Pancreas (tissue), 10 donors: ENCODE measurements at regions of chr21 and their contacts with region 1.

Region 1: DNA sequence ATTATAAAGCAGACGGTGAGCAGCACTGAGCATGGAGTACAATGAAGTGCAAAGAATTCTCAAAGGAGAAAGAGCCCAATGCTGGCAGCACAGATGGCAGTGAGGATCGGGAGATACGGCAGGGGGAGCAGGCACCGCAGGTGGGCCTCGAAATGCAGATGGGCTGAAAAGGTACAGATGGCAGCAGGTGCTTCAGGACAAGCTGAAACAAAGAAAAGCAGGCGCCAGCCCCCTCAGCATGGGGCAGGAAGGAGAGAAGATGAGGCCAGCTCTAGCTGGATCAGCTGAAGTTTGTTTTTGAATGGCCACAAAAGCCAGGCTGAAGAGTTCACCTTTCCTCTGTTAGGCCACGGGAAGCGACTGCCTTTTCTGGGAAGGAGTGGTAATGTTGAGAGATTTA is 7.7 kb downstream of the CFAP298 start:
- DNase-seq: no peak
- ATAC-seq: no peak
- H3K4me3 ChIP-seq: no peak overlapping the region
- H3K27ac ChIP-seq: no peak overlapping the region
- H3K4me1 ChIP-seq: no peaks in the 10 kb centered on the region
- H3K27me3 ChIP-seq: no peaks in the 10 kb centered on the region
- CTCF ChIP-seq: no peak

Region 2: GRCh38 chr21:32233055-32233546 is 371.4 kb before region 1 on chr21:
- intact Hi-C with region 1: no loop called
- DNase-seq: no peak
- ATAC-seq: peak in 1 of 4 donors; percentile 13
- H3K4me3 ChIP-seq: no peak overlapping the region
- H3K27ac ChIP-seq: no peak overlapping the region
- H3K4me1 ChIP-seq: no peaks in the 10 kb centered on the region
- H3K27me3 ChIP-seq: no peaks in the 10 kb centered on the region
- CTCF ChIP-seq: no peak

Region 3: DNA sequence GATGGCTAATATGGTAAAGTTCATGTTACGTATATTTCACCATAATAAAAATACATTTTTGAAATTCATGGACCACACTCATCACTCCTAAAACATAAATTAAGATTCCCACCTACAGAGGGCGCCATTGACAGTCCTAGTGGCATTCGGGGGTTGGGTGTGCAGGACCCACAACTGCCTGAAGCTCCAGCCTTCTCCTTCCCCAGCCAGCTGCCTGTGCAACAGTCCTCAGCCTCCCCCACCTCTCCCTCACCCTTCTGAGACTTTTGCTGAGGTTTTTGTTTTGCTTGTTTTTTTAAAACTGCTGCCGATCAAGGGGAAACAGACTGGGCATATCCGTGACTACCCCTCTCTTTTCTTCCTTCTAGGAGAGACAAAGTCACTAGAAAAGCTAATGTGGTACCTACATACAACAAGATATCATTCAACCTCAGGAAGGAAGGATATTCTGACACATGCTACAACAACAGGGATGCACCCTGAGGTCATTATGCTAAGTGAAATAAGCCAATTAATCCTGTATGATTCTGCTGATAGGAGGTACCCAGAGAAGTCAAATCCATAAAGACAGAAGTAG is 201.2 kb before region 1 on chr21:
- intact Hi-C with region 1: loop called in 2 of 3 experiments (anchors 5 to 10 kb)
- DNase-seq: peak in 4 of 6 donors; percentile 26 to 54 (median 45)
- ATAC-seq: peak; percentile 77 to 98 (median 92)
- H3K4me3 ChIP-seq: no peak overlapping the region
- H3K27ac ChIP-seq: no peak overlapping the region
- H3K4me1 ChIP-seq: no peaks in the 10 kb centered on the region
- H3K27me3 ChIP-seq: no peaks in the 10 kb centered on the region
- CTCF ChIP-seq: peak in 3 of 4 donors; percentile 23 to 59 (median 51)

Region 4: GRCh38 chr21:32499249-32500055 is 105.0 kb before region 1 on chr21:
- intact Hi-C with region 1: no loop called
- DNase-seq: no peak
- ATAC-seq: no peak
- H3K4me3 ChIP-seq: no peak overlapping the region
- H3K27ac ChIP-seq: no peak overlapping the region
- H3K4me1 ChIP-seq: no peaks in the 10 kb centered on the region
- H3K27me3 ChIP-seq: no peaks in the 10 kb centered on the region
- CTCF ChIP-seq: no peak

Region 5: GRCh38 chr21:32728848-32729247 is 124.4 kb after region 1 on chr21:
- intact Hi-C with region 1: no loop called
- DNase-seq: no peak
- ATAC-seq: no peak
- H3K4me3 ChIP-seq: peak overlapping the region in 2 of 4 donors; percentile 67 to 92
- H3K27ac ChIP-seq: peak overlapping the region in 2 of 4 donors; percentile 90 to 94
- H3K4me1 ChIP-seq: peaks cover 0 to 13% (median 10%) of the 10 kb centered on the region in 3 donors
- H3K27me3 ChIP-seq: no peaks in the 10 kb centered on the region
- CTCF ChIP-seq: no peak

Region 6: GRCh38 chr21:33286600-33287456 is 682.4 kb after region 1 on chr21:
- intact Hi-C with region 1: no loop called
- DNase-seq: peak in 3 of 6 donors; percentile 32 to 58 (median 37)
- ATAC-seq: peak; percentile 80 to 87 (median 84)
- H3K4me3 ChIP-seq: no peak overlapping the region
- H3K27ac ChIP-seq: peak overlapping the region; percentile 20 to 79 (median 54)
- H3K4me1 ChIP-seq: peaks cover 13 to 17% (median 14%) of the 10 kb centered on the region in 3 donors
- H3K27me3 ChIP-seq: no peaks in the 10 kb centered on the region
- CTCF ChIP-seq: no peak